Activated B cell treated with CpG ODN at 0.5 μM for 24 hours (primary cell): ENCODE measurements at regions of chr11 and their contacts with region 1.

Region 1: DNA sequence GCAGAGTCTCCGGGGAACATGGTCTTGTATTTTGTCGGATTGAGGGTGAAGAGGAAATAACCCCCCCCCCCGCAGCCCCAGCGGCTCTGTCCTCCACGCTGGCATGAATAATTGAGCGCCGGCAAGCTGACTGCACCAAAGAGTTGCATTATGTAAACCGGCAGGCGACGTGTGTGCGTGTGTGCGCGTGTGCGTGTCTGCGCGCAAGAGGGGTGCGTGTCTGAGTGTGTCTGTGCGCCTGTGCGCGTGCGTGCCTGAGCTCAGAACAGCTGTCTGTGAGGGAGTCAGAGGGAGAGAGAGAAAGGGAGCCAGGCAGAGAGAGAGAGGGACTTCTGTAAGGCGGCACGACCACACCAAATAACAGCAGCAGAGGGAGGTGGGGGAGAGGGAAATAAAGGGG is 94.4 kb downstream of the SCN3B start:
- DNase-seq: peak; percentile 38
- ATAC-seq: peak; percentile 88
- H3K4me3 Mint-ChIP-seq: peak overlapping the region; percentile 86
- H3K27ac Mint-ChIP-seq: peak overlapping the region; percentile 68
- H3K4me1 Mint-ChIP-seq: peaks cover 23% of the 10 kb centered on the region
- H3K27me3 Mint-ChIP-seq: no peaks in the 10 kb centered on the region
- CTCF ChIP-seq: no peak

Region 2: GRCh38 chr11:122954455-122954854 is 605.6 kb before region 1 on chr11:
- CTCF ChIA-PET with region 1: no interaction called
- POLR2A ChIA-PET with region 1: no interaction called
- intact Hi-C with region 1: no loop called
- DNase-seq: no peak
- ATAC-seq: no peak
- H3K4me3 Mint-ChIP-seq: no peak overlapping the region
- H3K27ac Mint-ChIP-seq: no peak overlapping the region
- H3K4me1 Mint-ChIP-seq: no peaks in the 10 kb centered on the region
- H3K27me3 Mint-ChIP-seq: no peaks in the 10 kb centered on the region
- CTCF ChIP-seq: no peak

Region 3: DNA sequence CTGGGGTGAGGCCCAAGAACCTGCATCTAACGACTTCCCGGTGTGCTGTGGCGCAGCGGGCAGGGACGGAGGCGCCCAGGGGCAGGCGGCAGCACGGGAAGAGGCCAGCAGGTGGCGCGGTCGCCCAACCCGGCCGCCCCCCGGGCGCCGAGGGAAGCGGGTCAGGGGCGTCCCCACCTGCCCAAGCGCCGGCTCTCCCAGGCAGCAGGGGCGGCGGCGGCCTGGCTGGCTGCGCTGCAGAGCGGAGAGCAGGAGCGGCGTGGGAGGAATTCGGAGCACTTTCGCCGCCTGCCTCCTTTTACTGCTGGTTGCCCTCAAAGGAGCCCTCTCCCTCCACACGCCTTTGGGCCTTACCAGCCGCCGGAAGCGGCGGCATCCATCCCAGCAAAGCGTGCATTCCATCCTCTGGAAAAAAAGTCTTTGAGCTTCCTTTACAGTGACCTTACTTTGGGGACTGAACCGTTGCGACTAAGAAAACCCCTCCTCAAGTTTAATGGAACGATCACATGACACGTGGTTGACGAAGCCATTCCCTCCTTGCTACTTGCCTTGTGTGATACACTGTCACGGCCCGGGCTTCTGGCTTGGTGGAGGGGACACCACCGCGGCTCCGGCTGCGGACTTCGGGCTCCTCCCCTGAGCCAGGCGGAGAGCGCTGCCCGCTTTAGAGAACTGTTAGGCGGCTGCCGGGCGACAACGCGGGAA is 258.2 kb before region 1 on chr11:
- CTCF ChIA-PET with region 1: no interaction called
- POLR2A ChIA-PET with region 1: no interaction called
- intact Hi-C with region 1: loop called (anchors 1 kb)
- DNase-seq: peak; percentile 65
- ATAC-seq: peak; percentile 79
- H3K4me3 Mint-ChIP-seq: peak overlapping the region; percentile 68
- H3K27ac Mint-ChIP-seq: no peak overlapping the region
- H3K4me1 Mint-ChIP-seq: peaks cover 29% of the 10 kb centered on the region
- H3K27me3 Mint-ChIP-seq: peaks cover 4% of the 10 kb centered on the region
- CTCF ChIP-seq: no peak

Region 4: DNA sequence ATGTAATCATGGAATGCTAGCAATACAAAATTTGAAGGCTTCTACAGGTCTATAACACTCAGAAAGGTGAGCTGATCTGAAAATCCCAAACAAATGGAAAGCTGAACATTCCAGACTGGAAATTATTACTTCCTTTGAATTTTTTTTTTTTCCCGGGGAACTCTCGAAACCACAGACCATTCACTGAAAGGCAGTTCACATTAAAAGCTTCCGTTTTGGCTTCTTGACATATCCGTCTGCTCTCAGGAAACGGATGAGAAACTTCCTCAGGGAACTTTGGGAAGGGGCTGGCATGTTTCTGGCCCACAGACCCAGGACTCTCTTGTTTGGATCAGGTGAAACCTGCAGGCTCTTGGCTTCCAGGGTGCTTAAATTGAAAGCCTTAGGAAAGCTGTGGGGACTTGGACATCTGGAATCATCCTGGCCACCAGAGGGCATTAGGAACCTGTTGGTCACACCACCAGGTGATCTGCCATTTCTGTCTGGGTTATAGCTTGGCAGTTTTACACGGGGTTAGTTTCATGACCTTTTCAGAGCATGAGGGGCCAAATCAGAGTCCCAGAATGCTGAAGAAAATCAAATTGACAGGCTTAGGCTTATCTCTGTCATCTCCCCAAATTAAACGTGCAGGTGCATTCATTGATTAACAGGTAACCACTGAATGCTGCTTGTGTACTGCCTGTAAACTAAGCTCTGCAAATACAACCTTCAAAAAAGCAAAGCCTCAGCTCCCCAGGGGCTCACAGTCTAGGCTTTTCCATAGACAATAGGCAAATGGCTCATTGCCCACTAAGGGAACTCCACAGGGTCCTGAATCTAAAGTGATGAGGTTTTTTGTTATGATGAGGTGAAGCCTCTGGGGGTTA is 152.6 kb before region 1 on chr11:
- CTCF ChIA-PET with region 1: interaction called, 15 read pairs
- POLR2A ChIA-PET with region 1: no interaction called
- intact Hi-C with region 1: loop called (anchors 1 kb)
- DNase-seq: no peak
- ATAC-seq: peak; percentile 56
- H3K4me3 Mint-ChIP-seq: no peak overlapping the region
- H3K27ac Mint-ChIP-seq: no peak overlapping the region
- H3K4me1 Mint-ChIP-seq: peaks cover 6% of the 10 kb centered on the region
- H3K27me3 Mint-ChIP-seq: peaks cover 4% of the 10 kb centered on the region
- CTCF ChIP-seq: no peak

Region 5: DNA sequence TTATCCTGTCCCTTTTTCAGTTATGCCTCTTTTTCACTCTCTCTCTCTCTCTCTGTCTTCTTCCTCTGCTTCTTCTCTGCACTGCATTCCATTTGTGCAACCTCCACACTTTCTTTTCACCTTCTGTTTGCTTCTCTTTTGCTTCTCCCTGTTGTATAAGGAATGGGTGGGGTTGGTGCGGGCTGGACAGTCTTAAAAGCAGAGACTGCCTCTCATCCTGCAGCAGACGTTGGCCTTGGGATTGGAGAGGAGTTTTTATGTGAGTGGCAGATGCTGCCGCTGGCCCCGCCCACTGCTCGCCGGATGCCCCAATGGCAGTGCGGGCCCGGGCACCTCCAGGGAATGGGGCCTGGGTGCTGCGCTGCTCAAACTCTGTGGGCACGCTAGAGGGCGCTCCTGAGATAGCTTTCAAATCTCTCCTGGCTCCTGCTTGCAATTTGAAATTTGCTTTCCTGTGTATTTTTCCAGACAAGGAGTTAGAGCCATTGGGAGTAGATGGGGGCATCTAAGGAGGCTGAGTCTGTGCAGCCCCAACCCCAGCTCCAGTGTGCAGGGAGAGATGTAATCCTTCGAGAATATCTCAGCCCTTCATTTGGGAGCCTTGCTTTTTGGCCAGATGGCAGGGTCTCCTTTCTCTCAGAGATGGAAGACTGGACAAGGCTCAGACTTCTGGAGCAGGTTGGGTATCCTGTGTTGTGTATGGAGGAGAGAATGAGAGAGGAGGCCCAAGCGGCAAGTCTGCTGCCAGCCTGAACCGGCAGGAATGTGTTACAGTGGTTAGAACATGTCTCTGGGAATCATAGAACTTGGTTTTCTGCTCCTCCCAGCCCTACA is 48.8 kb before region 1 on chr11:
- CTCF ChIA-PET with region 1: interaction called, 3 read pairs
- POLR2A ChIA-PET with region 1: no interaction called
- intact Hi-C with region 1: loop called (anchors 1 kb)
- DNase-seq: peak; percentile 52
- ATAC-seq: peak; percentile 99
- H3K4me3 Mint-ChIP-seq: no peak overlapping the region
- H3K27ac Mint-ChIP-seq: no peak overlapping the region
- H3K4me1 Mint-ChIP-seq: peaks cover 6% of the 10 kb centered on the region
- H3K27me3 Mint-ChIP-seq: no peaks in the 10 kb centered on the region
- CTCF ChIP-seq: peak; percentile 39

Region 6: GRCh38 chr11:123532131-123532530 is 27.9 kb before region 1 on chr11:
- CTCF ChIA-PET with region 1: no interaction called
- POLR2A ChIA-PET with region 1: no interaction called
- intact Hi-C with region 1: no loop called
- DNase-seq: no peak
- ATAC-seq: no peak
- H3K4me3 Mint-ChIP-seq: no peak overlapping the region
- H3K27ac Mint-ChIP-seq: no peak overlapping the region
- H3K4me1 Mint-ChIP-seq: no peaks in the 10 kb centered on the region
- H3K27me3 Mint-ChIP-seq: no peaks in the 10 kb centered on the region
- CTCF ChIP-seq: no peak

Region 7: DNA sequence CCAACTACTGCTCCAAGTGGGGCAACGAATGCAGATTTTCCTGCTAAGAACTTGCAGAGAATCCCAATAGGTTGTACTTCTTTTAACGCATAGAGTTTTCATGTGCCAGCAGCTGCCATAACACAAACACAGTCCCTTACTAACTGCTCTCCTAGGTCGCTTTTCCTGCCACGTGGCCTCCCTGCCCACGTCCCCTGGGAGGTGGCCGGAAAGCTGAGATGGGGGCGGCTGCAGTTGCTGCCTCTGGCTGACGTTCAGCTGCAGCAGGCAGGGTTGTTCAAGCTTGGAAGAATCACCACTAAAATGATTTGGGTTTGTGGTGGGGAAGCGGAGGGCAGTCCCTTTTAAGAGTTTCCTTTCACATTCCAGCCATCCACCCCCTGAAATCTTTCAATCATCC is 142.1 kb after region 1 on chr11:
- CTCF ChIA-PET with region 1: no interaction called
- POLR2A ChIA-PET with region 1: no interaction called
- intact Hi-C with region 1: no loop called
- DNase-seq: no peak
- ATAC-seq: no peak
- H3K4me3 Mint-ChIP-seq: peak overlapping the region; percentile 26
- H3K27ac Mint-ChIP-seq: no peak overlapping the region
- H3K4me1 Mint-ChIP-seq: peaks cover 14% of the 10 kb centered on the region
- H3K27me3 Mint-ChIP-seq: peaks cover 7% of the 10 kb centered on the region
- CTCF ChIP-seq: no peak